Activated naive CD4-positive, alpha-beta T cell treated with anti-CD3 and anti-CD28 coated beads for 36 hours (primary cell): ENCODE measurements at regions of chr2 and their contacts with region 1.

Region 1: DNA sequence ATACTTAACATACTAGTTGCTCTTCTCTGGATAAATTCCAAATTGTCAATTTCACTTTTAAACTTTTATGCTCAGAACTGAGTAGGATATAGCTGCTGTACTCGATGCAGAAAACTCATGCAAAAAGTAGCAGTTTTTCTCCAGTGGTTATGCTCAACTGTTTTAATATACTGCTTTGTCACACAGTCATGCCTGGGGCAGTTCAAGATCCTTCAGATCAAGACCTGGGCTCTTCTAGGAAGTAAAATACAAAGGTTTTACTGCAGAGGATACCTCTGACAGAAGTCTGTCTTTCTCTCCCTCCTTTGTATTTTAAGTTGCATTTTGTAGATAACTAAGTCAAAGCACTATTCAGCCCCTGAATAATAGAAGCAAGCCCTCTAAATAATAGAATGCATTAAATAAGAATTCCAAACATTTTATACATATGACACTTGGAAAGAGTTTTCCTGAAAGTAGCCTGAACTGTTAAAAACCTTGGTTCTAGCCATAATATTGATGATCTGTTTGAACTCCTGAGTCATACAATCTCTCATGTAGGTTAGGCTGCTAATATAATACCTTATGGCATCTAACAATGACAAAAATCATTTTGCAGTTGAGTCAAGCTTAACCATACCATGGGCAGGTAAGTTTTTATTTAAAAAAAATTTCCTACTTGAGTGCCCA is 183.3 kb upstream of the TRIB2 start:
- DNase-seq: no peak
- H3K4me3 Mint-ChIP-seq: no peak overlapping the region
- H3K27ac Mint-ChIP-seq: no peak overlapping the region
- H3K4me1 Mint-ChIP-seq: peaks cover 19% of the 10 kb centered on the region
- H3K27me3 Mint-ChIP-seq: no peaks in the 10 kb centered on the region

Region 2: DNA sequence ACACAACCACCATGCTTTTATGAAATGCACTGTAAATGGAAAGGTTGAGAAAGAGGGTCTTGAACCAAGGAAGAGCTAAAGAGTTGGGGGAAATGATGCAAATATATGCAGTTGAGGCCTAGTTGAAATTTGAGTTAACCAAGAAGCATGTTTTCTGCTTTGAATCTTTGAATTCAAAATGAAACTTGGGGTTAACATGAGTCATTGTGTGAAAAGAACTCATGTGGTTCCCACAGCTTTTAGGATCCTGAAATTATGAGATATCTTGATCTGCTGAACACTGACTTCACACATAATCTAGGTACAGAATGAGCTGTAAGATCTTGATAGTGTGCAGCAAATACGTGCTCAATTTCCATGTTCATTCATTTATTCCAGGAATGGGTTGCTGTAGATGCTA is 239.6 kb before region 1 on chr2:
- CTCF ChIA-PET with region 1: no interaction called
- intact Hi-C with region 1: no loop called
- DNase-seq: peak; percentile 18
- H3K4me3 Mint-ChIP-seq: no peak overlapping the region
- H3K27ac Mint-ChIP-seq: peak overlapping the region; percentile 75
- H3K4me1 Mint-ChIP-seq: peaks cover 55% of the 10 kb centered on the region
- H3K27me3 Mint-ChIP-seq: peaks cover 6% of the 10 kb centered on the region

Region 3: DNA sequence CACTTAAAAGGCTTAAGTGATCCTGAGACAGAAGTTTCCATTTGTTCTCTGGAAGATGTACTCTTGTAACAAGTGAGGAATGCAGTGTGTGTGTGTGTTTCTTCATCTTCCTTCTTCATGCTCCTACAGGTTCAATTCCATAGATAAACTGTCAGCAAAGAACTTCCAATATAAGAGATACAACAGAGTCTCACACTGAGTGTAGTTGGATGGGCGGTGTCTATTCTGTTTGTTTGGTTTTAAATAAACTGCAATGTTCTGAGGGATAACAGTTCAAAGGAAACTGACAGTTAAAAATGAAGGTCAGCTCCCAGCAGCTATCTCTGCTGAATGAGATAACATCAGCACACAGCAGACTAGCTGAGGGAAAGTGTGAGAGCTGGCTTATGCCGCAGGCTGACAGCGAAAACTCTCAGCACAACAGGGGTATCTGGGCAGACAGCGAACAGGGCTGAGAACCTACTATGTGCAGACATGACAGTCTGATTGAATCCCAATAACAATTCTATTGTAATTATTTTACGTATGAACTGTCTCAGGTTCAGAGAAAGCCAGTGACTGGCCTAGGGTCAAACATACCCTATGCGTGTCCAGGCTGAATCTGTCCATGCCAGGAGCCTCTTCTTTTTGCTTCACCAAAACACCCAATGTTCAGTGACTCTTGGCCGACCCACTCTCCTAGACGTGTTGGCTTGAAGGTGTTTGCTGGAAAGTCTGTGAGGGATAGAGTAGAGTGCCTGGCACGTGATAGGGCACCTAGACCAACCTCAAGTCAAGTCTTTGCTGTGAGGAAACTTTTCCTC is 18.6 kb before region 1 on chr2:
- CTCF ChIA-PET with region 1: interaction called, 3 read pairs
- intact Hi-C with region 1: loop called (anchors 2 kb)
- DNase-seq: peak; percentile 21
- H3K4me3 Mint-ChIP-seq: no peak overlapping the region
- H3K27ac Mint-ChIP-seq: no peak overlapping the region
- H3K4me1 Mint-ChIP-seq: peaks cover 46% of the 10 kb centered on the region
- H3K27me3 Mint-ChIP-seq: no peaks in the 10 kb centered on the region

Region 4: DNA sequence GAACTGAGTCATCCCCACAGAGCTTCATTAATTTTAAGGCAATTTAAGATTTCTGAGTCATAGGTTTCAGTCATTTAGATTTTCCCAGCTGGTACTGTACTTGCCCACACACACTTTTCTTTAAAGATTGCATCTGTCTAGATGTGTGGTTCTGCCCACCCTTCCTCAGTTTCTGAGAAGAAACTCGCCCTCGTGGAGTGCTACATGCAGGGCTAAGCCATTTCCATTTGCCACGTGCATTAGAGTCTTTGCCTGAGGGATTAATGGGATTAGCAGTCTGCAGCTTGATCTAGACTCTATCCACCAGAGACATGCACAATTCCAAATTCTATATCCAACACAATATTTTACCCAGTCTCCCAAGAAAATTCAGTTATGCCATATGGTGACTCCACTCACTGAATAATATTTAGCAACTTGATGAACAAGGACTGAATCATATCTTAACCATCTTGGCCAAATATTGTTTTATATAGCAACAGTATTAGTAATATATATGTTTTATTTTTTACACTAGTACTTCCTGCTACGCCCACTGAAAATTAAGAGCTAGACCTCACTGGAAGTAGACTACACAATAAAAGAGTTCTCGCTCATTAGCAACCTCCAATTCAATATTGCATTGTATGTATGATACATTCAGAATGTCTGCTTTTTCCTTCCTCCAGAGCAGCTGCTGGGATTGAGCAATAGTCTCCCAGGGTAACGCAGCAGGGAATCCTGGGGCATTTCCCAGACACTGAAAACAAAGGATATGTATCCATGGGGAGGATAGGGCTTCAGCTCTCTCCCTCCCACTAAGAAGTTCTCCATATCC is 169.0 kb after region 1 on chr2:
- CTCF ChIA-PET with region 1: no interaction called
- intact Hi-C with region 1: no loop called
- DNase-seq: no peak
- H3K4me3 Mint-ChIP-seq: no peak overlapping the region
- H3K27ac Mint-ChIP-seq: no peak overlapping the region
- H3K4me1 Mint-ChIP-seq: peaks cover 41% of the 10 kb centered on the region
- H3K27me3 Mint-ChIP-seq: no peaks in the 10 kb centered on the region